ENCODE measurements at regions of chr19 and their contacts with region 1.

Region 1: DNA sequence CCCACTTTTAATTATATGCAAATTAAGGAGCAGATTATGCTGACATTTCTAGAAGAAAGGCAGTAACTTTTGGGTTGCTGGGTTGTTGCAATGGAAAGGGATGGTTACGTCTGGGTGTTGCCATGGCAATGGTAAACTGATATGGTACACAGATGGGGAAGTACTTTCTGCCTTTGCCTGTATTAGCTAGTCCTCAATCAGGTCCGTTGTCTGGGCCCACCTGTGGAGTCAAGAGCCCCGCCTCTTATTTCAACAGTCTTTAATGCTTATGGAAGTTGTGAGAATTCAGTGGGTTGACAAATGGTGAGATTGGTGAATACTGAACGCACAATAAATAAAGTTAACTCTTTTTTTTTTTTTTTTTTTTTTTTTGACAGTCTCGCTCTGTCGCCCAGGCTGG is 30.6 kb upstream of the DPP9 start:
- DNase-seq: no peak
- H3K4me3 ChIP-seq: no peak overlapping the region
- H3K27ac ChIP-seq: no peak overlapping the region
- H3K4me1 ChIP-seq: no peaks in the 10 kb centered on the region
- H3K27me3 ChIP-seq: no peaks in the 10 kb centered on the region
- CTCF ChIP-seq: no peak

Region 2: DNA sequence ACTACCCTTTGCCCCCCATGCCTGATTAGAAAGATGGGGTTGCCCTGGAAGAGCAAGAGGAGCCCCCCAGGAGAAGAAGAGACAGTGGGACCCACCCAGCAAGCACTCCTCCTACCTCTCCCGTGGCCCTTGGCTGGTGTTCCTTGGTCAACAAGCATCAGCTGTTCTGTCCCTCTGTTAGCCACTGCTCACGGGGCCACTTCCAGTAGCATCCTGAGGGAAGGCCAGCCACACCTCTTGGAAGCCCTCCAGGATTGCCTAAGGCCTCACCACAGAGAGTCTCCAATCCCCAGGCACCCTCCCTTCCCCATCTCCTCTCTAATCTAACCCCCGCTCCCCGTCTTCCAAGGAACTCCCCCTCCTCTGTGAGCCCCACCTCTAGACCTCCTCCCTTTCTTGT is 15.5 kb before region 1 on chr19:
- CTCF ChIA-PET with region 1: interaction called, 11 read pairs
- POLR2A ChIA-PET with region 1: no interaction called
- intact Hi-C with region 1: no loop called
- DNase-seq: no peak
- H3K4me3 ChIP-seq: no peak overlapping the region
- H3K27ac ChIP-seq: no peak overlapping the region
- H3K4me1 ChIP-seq: peaks cover 21% of the 10 kb centered on the region
- H3K27me3 ChIP-seq: no peaks in the 10 kb centered on the region
- CTCF ChIP-seq: no peak

Region 3: GRCh38 chr19:4829001-4829712 is 74.9 kb after region 1 on chr19:
- CTCF ChIA-PET with region 1: no interaction called
- POLR2A ChIA-PET with region 1: no interaction called
- intact Hi-C with region 1: no loop called
- DNase-seq: no peak
- H3K4me3 ChIP-seq: no peak overlapping the region
- H3K27ac ChIP-seq: no peak overlapping the region
- H3K4me1 ChIP-seq: no peaks in the 10 kb centered on the region
- H3K27me3 ChIP-seq: no peaks in the 10 kb centered on the region
- CTCF ChIP-seq: no peak

Region 4: GRCh38 chr19:4851551-4852290 is 97.5 kb after region 1 on chr19:
- CTCF ChIA-PET with region 1: no interaction called
- POLR2A ChIA-PET with region 1: no interaction called
- intact Hi-C with region 1: no loop called
- DNase-seq: peak; percentile 75
- H3K4me3 ChIP-seq: no peak overlapping the region
- H3K27ac ChIP-seq: no peak overlapping the region
- H3K4me1 ChIP-seq: no peaks in the 10 kb centered on the region
- H3K27me3 ChIP-seq: no peaks in the 10 kb centered on the region
- CTCF ChIP-seq: peak; percentile 95